Mammary epithelial cell (primary cell): ENCODE measurements at regions of chr3 and their contacts with region 1.

Region 1: DNA sequence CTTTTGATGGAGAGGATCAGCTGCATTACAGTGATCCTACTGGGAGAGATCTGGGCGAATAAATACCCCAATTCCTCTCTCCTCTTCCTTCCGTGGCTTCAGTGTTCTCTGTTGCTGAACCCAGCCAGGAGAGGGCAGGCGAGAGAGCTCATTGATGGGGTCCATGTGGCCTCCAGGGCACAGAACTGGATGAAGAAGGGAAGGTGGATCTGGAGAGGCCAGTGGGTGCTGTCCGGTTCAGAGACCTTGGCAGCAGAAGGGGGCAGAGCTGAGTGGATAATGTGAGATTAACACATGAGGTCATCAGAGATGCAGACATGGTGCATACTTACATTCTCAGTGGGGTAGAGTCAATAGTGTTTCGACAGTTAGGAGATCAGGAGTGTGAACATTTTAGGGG is 193.6 kb downstream of the CLSTN2 start:
- DNase-seq: peak; percentile 8
- H3K4me3 ChIP-seq: no peak overlapping the region
- H3K27ac ChIP-seq: no peak overlapping the region
- H3K4me1 ChIP-seq: no peaks in the 10 kb centered on the region
- H3K27me3 ChIP-seq: no peaks in the 10 kb centered on the region
- CTCF ChIP-seq: peak; percentile 27 to 59

Region 2: DNA sequence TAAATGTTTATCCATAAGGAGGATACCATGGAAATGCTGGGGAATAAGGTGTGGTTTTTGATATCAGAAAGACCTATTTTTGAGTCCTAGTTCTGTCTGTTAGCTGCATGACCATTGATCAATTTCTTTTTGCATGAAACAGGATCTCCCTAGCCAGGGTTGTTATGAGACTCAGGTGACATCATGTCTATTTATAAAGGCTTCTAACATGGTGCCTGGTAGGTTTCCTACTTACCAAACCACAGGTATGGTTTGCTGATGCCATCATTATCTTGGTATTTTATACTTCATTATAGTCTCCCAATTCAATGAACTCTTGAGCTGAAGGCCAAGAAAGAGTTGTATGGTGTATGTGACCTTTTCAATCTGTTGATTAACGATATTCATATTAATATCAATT is 49.7 kb before region 1 on chr3:
- CTCF ChIA-PET with region 1: no interaction called
- dilution Hi-C with region 1: no loop called
- in situ Hi-C with region 1: no loop called
- intact Hi-C with region 1: no loop called
- DNase-seq: no peak
- H3K4me3 ChIP-seq: no peak overlapping the region
- H3K27ac ChIP-seq: no peak overlapping the region
- H3K4me1 ChIP-seq: no peaks in the 10 kb centered on the region
- H3K27me3 ChIP-seq: peaks cover 5% of the 10 kb centered on the region
- CTCF ChIP-seq: no peak

Region 3: GRCh38 chr3:140206196-140207048 is 77.8 kb after region 1 on chr3:
- CTCF ChIA-PET with region 1: no interaction called
- dilution Hi-C with region 1: no loop called
- in situ Hi-C with region 1: no loop called
- intact Hi-C with region 1: loop called (anchors 2 kb)
- DNase-seq: peak; percentile 39
- H3K4me3 ChIP-seq: no peak overlapping the region
- H3K27ac ChIP-seq: no peak overlapping the region
- H3K4me1 ChIP-seq: no peaks in the 10 kb centered on the region
- H3K27me3 ChIP-seq: no peaks in the 10 kb centered on the region
- CTCF ChIP-seq: peak; percentile 38 to 64